Spleen (tissue), 13 donors: ENCODE measurements at regions of chr2 and their contacts with region 1.

Region 1: GRCh38 chr2:10122386-10123280 is at the start of gene RRM2:
- DNase-seq: peak; percentile 94
- H3K4me3 ChIP-seq: peak within 1 kb of the TSS; percentile 30 to 79 (median 62)
- H3K27ac ChIP-seq: peak within 1 kb of the TSS in 5 of 8 donors; percentile 36 to 89 (median 43)
- H3K4me1 ChIP-seq: peaks cover 34 to 95% (median 60%) of the 10 kb centered on the region in 6 donors
- H3K27me3 ChIP-seq: peaks cover 3 to 31% (median 23%) of the 10 kb centered on the region in 7 donors
- CTCF ChIP-seq: peak in 2 of 11 experiments; percentile 37 to 63
- POLR2A ChIP-seq: no peak
- total RNA-seq, gene RRM2: 6.3 to 39.2 (median 14.3) TPM

Region 2: GRCh38 chr2:10434886-10435819 is 312.5 kb after region 1 on chr2:
- intact Hi-C with region 1: loop called (anchors 5 kb)
- DNase-seq: peak; percentile 95
- H3K4me3 ChIP-seq: no peak overlapping the region
- H3K27ac ChIP-seq: peak overlapping the region in 1 of 8 donors; percentile 4
- H3K4me1 ChIP-seq: peaks cover 0 to 37% (median 29%) of the 10 kb centered on the region in 6 donors
- H3K27me3 ChIP-seq: peaks cover 0 to 20% (median 0%) of the 10 kb centered on the region in 7 donors
- CTCF ChIP-seq: peak; percentile 95 to 99 (median 98)
- POLR2A ChIP-seq: no peak